Activated T-helper 2 cell treated with anti-CD3 and anti-CD28 coated beads, Interferon-gamma antibody, Interleukin-2, Interleukin-4, amounts not matched to agents 10 μg/mL and 5 μg/mL and 100 μg/mL, durations not matched to agents 14 hours and 24 hours and 36 hours (primary cell): ENCODE measurements at regions of chr12 and their contacts with region 1.

Region 1: DNA sequence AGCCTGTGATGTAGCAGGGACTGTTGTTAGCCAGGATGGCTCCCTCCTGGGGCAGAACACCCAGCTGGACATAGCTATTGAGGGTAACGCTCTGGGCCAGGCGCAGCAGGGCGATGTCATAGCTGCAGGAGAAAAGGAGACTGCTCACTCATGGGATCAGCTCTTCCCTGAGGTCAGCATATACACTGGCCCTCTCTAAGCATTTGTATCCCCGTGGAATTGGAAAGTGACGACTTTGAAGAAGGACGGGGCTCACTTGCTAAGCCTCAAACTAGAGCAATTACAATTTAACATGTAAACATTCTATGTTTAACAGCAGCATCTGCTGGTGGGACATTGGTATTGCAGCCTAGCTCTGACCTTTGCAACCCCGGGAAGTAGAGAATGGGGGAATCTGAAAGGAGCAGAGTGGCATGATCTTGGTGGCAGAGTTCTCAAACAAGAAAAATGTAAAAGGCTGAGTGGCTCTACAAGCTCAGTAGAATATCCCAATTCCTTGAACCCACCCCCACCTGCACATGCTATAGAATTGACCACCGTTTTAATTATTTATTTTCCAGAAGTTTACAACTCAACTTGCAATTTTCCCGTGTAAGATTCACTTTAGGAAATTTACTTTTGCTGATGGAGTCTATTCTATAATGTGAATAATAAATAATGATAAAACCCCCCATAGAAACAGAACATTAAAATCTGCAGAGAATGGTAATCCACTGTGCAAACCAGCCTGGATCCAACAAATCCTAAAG is 5.0 kb downstream of the CELA1 start:
- DNase-seq: peak; percentile 60
- H3K4me3 Mint-ChIP-seq: no peak overlapping the region
- H3K27ac Mint-ChIP-seq: no peak overlapping the region
- H3K4me1 Mint-ChIP-seq: peaks cover 11% of the 10 kb centered on the region
- H3K27me3 Mint-ChIP-seq: no peaks in the 10 kb centered on the region

Region 2: GRCh38 chr12:49366652-49367380 is 1974.6 kb before region 1 on chr12:
- intact Hi-C with region 1: no loop called
- DNase-seq: peak; percentile 90
- H3K4me3 Mint-ChIP-seq: peak overlapping the region; percentile 86
- H3K27ac Mint-ChIP-seq: peak overlapping the region; percentile 95
- H3K4me1 Mint-ChIP-seq: peaks cover 35% of the 10 kb centered on the region
- H3K27me3 Mint-ChIP-seq: no peaks in the 10 kb centered on the region

Region 3: DNA sequence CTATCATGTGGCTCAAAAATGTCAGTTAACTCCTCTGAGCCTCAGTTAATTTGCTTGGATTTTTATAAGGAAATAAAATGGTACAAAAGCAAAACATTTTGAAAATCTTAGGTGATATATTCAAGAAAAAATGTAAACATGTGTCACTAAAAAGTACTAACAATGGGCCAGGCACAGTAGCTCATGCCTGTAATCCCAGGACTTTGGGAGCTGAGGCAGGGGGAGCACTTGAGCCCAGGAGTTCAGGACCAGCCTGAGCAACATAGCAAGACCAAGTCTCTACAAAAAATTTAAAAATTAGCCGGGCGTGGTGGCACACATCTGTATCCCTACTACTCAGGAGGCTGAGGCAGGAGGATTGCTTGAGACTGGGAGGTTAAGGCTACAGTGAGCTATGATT is 1343.0 kb before region 1 on chr12:
- intact Hi-C with region 1: no loop called
- DNase-seq: no peak
- H3K4me3 Mint-ChIP-seq: no peak overlapping the region
- H3K27ac Mint-ChIP-seq: no peak overlapping the region
- H3K4me1 Mint-ChIP-seq: no peaks in the 10 kb centered on the region
- H3K27me3 Mint-ChIP-seq: no peaks in the 10 kb centered on the region

Region 4: DNA sequence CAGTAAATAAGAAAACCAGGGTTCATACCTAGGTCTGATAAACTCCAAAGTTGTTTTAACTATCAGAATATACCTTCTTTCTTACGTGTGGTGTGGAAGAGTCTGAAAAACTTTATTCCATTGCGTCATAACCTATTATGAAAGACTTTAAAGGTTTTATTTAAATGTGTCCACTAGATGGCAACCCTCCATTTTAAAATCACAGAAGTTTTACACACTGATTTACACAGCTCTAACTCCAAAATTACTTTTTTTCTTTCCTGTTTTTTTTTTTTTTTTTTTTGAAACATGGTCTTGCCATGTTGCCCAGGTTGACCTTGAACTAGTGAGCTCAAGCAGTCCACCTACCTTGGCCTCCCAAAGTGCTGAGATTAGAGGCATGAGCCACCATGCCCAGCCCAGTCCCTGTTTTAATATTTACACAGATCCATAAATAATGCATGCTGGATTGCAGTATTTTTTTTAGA is 516.0 kb before region 1 on chr12:
- intact Hi-C with region 1: loop called (anchors 10 kb)
- DNase-seq: no peak
- H3K4me3 Mint-ChIP-seq: no peak overlapping the region
- H3K27ac Mint-ChIP-seq: no peak overlapping the region
- H3K4me1 Mint-ChIP-seq: peaks cover 6% of the 10 kb centered on the region
- H3K27me3 Mint-ChIP-seq: no peaks in the 10 kb centered on the region

Region 5: GRCh38 chr12:51172515-51173431 is 168.7 kb before region 1 on chr12 and contains the start of gene TFCP2:
- intact Hi-C with region 1: no loop called
- DNase-seq: peak; percentile 93
- H3K4me3 Mint-ChIP-seq: peak within 1 kb of the TSS; percentile 80
- H3K27ac Mint-ChIP-seq: peak within 1 kb of the TSS; percentile 71
- H3K4me1 Mint-ChIP-seq: peaks cover 10% of the 10 kb centered on the region
- H3K27me3 Mint-ChIP-seq: no peaks in the 10 kb centered on the region
- total RNA-seq, gene TFCP2: 42.2 and 44.2 TPM in 2 replicates

Region 6: GRCh38 chr12:51269174-51270066 is 72.0 kb before region 1 on chr12:
- intact Hi-C with region 1: loop called (anchors 1 kb)
- DNase-seq: peak; percentile 31
- H3K4me3 Mint-ChIP-seq: peak overlapping the region; percentile 75
- H3K27ac Mint-ChIP-seq: no peak overlapping the region
- H3K4me1 Mint-ChIP-seq: peaks cover 19% of the 10 kb centered on the region
- H3K27me3 Mint-ChIP-seq: peaks cover 39% of the 10 kb centered on the region